PC-3 (cell line): ENCODE measurements at regions of chr20 and their contacts with region 1.

Region 1: DNA sequence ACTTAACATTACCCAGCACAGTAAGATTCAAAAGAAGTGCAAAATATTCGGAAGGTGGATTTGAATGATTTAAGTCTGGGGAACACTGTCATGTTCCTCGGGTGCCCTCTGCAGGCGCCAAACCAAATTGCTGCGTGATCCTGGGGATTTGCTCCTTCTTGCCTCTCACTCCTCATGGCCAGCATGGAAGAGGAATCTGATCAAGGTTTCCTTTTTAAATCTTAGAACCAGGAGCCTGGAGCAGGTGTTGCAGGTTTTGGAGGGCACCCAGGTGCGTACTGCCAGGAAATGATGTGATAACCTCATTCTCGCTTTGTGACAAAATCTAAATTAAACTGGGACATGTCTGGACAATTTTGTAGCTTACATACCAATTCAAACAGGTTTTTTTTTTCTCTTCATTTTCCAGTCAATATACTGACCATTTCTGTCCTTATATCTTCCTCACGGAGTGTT is 8.1 kb upstream of the PFDN4 start:
- DNase-seq: peak; percentile 95
- ATAC-seq: peak; percentile 61
- H3K4me3 ChIP-seq: no peak overlapping the region
- H3K27ac ChIP-seq: no peak overlapping the region
- H3K4me1 ChIP-seq: peaks cover 18% of the 10 kb centered on the region
- H3K27me3 ChIP-seq: no peaks in the 10 kb centered on the region
- CTCF ChIP-seq: peak; percentile 99

Region 2: GRCh38 chr20:54097236-54097529 is 102.6 kb before region 1 on chr20:
- CTCF ChIA-PET with region 1: interaction called, 8 read pairs
- POLR2A ChIA-PET with region 1: interaction called, 5 read pairs
- intact Hi-C with region 1: loop called (anchors 1 kb)
- DNase-seq: no peak
- ATAC-seq: peak; percentile 23
- H3K4me3 ChIP-seq: no peak overlapping the region
- H3K27ac ChIP-seq: no peak overlapping the region
- H3K4me1 ChIP-seq: no peaks in the 10 kb centered on the region
- H3K27me3 ChIP-seq: no peaks in the 10 kb centered on the region
- CTCF ChIP-seq: no peak

Region 3: DNA sequence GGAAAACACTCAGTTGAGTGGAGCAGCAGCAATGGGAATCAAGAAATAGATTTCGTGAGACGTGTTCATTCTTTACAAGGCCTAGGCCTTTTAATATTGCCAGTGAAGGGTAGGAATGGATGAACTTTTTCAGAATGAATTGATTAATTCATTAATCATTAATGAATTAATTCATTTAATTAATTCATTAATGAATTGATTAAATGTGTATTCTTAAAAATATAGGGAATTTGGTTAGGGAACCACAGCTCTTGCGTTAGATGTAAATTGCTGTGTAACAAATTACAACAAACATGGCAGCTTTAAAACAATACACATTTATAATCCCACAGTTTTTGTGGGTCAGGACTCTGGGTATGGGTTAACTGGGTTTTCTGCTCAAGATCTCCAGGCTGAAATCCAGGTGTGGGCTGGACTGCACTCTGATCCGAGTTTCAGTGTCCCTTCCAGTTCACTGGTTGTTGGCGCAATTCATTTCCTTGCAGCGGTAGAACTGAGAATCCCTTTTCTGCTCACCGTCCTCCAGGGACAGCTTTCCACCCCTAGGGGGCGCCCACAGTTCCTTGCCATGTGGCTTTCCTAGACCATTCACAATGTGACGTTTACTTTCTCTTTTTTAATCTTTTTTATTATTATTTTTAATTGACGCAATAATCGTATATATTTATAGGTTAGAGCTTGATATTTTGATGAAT is 96.5 kb before region 1 on chr20:
- CTCF ChIA-PET with region 1: interaction called, 6 read pairs
- POLR2A ChIA-PET with region 1: no interaction called
- intact Hi-C with region 1: loop called (anchors 1 kb)
- DNase-seq: peak; percentile 92
- ATAC-seq: peak; percentile 96
- H3K4me3 ChIP-seq: no peak overlapping the region
- H3K27ac ChIP-seq: no peak overlapping the region
- H3K4me1 ChIP-seq: no peaks in the 10 kb centered on the region
- H3K27me3 ChIP-seq: no peaks in the 10 kb centered on the region
- CTCF ChIP-seq: peak; percentile 97

Region 4: GRCh38 chr20:54305421-54305820 is 105.7 kb after region 1 on chr20:
- CTCF ChIA-PET with region 1: no interaction called
- POLR2A ChIA-PET with region 1: no interaction called
- intact Hi-C with region 1: no loop called
- DNase-seq: no peak
- ATAC-seq: no peak
- H3K4me3 ChIP-seq: no peak overlapping the region
- H3K27ac ChIP-seq: no peak overlapping the region
- H3K4me1 ChIP-seq: no peaks in the 10 kb centered on the region
- H3K27me3 ChIP-seq: peaks cover 46% of the 10 kb centered on the region
- CTCF ChIP-seq: no peak

Region 5: DNA sequence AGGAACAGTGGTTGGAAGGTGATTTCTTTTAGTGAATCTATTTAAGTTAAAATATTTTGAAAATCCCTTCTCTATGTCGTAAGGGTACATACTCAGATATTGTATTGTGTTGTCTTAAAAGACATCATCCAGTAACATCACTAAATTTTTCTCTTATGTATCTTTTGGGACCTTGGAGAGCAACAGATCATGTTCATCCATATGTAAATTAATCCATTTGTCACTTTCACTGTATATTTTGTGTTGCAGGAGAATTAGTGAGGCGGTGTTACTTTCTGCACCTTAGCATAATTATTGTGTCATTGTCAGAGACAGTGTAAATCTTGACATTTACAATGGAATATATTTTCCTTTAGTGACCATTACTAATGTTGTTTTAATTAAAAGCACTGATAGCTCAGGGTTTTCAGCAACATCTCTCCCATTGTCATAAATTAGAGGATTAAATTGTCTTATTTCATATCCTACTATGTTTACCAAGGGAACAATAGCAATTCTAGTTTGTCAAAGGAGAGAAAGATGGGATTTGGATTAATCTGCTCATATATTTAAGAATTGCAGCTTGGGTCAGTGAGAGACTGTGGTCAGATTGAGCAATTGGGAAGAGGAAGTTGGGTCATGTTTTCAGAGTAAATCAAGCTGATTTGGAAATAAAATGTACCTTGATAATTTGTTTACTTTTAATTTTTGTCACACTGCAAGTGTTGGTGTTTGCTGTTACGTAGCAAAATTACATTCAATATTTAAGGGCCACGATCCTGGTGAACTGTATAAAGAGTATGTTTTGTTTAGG is 298.4 kb after region 1 on chr20:
- CTCF ChIA-PET with region 1: interaction called, 16 read pairs
- POLR2A ChIA-PET with region 1: no interaction called
- intact Hi-C with region 1: no loop called
- DNase-seq: no peak
- ATAC-seq: no peak
- H3K4me3 ChIP-seq: no peak overlapping the region
- H3K27ac ChIP-seq: no peak overlapping the region
- H3K4me1 ChIP-seq: 0 out of 2 replicates have a peak, but pooled peaks cover 5% of the 10 kb centered on the region
- H3K27me3 ChIP-seq: peaks cover 43% of the 10 kb centered on the region
- CTCF ChIP-seq: no peak

Region 6: DNA sequence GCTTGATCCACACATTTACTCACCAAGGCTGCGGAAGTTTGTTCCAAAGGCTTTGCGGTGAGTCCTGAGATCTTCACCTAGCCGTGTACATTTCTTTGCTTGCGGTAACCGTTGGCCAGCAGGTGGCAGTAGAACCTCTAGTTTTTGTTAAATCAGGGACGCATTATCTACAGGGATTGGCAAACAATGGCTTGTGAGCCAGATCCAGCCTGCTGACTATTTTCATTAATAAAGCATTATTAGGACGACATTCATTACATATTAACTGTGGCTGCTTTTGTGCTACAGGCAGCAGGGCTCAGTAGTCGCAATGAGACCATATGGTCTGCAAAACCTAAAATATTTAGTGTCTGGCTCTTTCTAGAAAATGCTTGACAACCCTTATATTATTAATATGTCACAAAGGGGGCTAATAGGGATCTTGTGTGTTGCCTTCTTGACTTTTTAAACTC is 449.8 kb after region 1 on chr20:
- CTCF ChIA-PET with region 1: interaction called, 13 read pairs
- POLR2A ChIA-PET with region 1: no interaction called
- intact Hi-C with region 1: no loop called
- DNase-seq: peak; percentile 95
- ATAC-seq: peak; percentile 92
- H3K4me3 ChIP-seq: no peak overlapping the region
- H3K27ac ChIP-seq: no peak overlapping the region
- H3K4me1 ChIP-seq: no peaks in the 10 kb centered on the region
- H3K27me3 ChIP-seq: peaks cover 37% of the 10 kb centered on the region
- CTCF ChIP-seq: peak; percentile 95

Region 7: DNA sequence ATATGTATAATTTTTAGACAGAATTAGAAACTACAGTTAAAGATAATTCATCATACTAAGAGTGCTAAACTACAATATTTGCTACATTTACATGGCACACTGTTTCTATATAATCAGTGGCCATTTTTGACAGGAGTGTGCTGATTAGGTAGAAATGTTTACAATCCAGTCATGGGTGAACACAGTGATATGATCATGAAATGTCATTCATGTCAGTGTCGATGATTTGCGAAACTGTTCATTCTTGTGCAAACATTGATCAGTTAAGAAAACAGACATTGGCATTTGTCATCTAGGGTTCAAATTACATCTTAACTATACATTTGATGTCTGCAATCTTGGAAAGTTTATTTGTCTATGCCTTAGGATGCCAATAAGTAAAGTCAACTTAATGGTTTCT is 750.5 kb after region 1 on chr20:
- CTCF ChIA-PET with region 1: no interaction called
- POLR2A ChIA-PET with region 1: no interaction called
- intact Hi-C with region 1: no loop called
- DNase-seq: no peak
- ATAC-seq: no peak
- H3K4me3 ChIP-seq: no peak overlapping the region
- H3K27ac ChIP-seq: no peak overlapping the region
- H3K4me1 ChIP-seq: no peaks in the 10 kb centered on the region
- H3K27me3 ChIP-seq: no peaks in the 10 kb centered on the region
- CTCF ChIP-seq: no peak